GM18951 (cell line): ENCODE measurements at regions of chr12 and their contacts with region 1.

Region 1: GRCh38 chr12:9797722-9798619 is 29.3 kb upstream of the KLRF1 start:
- POLR2A ChIP-seq: no peak

Region 2: DNA sequence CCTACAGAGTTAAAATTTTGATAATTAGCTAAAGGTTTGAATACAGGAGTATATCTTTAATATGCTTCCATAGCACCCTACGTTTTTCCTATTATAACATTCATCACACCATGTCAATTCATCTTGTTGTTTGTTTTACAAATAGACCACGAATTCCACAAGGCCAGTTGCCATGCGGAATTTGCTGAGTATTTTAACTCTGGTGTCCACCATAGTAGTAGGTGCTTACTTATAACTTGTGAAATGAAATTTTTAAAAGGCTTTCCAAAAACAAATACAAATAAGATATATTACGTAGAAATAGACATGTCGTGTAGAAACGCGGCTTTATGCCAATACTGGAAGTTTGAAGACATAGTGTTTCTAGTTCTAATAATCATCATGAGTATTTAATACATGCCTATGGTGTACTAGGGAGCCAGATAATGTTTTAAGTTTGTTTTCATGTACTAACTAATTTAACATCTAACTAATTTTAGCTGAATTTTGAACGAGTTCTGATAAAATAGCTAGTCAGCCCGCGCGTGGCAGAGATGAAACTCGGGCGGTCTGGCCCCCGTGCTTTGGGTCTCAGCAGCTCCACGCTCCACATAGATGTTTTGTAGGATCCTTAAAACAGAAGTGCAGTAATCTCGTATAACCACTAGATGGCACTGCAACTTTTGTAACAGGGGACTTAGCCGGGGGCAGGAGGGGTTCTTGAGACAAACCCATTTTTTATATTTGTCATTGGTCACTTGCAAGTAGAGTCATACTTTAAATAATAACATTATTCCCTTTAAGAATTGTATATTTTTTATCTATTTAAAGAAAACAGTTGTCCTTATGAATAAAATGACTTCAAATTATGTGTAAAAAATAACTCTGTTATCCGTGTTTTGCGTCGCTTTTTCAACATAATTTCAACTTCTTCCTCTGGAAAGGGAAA is 47.4 kb before region 1 on chr12:
- in situ Hi-C with region 1: loop called (anchors 5 kb)
- POLR2A ChIP-seq: no peak